ENCODE measurements at regions of chr2 and their contacts with region 1.

Region 1: GRCh38 chr2:206442833-206443734 is at the start of gene ADAM23:
- DNase-seq: peak; percentile 87 to 95 (median 92)
- H3K4me3 ChIP-seq: peak within 1 kb of the TSS; percentile 54 to 90 (median 74)
- H3K27ac ChIP-seq: peak within 1 kb of the TSS; percentile 23 to 96 (median 89)
- H3K27me3 ChIP-seq: no peaks in the 10 kb centered on the region
- CTCF ChIP-seq: peak in 54 of 56 donors; percentile 21 to 69 (median 49)
- total RNA-seq, gene ADAM23: 25.3 to 107 (median 76.3) TPM

Region 2: DNA sequence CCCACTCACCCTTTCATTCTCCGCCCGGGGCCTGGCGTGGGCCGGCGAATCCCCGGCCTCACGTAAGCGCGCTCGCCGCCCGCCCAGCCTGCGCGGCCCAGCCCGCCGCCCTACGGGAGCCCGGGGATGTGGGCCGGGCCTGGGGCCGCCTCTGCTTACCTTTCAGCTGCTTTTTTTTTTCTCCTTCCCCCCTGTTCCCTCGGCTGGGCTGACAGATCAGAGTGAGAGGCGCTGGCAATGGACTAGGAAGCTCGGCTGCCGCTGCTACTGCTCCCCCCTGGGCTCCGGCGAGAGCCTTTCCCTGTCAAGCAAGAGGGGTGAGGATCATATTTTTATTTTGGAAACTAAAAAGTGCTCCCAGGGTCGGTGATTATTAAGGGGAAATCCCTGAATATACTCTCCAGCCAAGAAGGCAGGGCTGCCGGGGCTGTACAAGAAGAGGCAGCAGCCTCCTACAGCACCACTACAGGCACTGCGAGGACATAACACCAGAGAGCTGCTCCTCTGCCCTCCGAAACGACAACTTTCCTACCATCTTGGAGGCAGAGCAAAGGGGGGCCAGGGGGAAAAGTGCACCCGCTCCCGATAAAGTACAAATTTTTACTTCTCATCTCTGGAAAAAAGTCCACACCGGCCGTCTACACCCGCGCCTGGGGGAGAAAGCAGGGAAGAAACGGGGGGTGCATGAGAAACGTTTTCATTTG is 357.2 kb before region 1 on chr2 and contains the start of gene INO80D:
- intact Hi-C with region 1: loop called in 1 of 2 experiments (anchors 5 kb)
- DNase-seq: peak; percentile 45 to 85 (median 73)
- H3K4me3 ChIP-seq: peak within 1 kb of the TSS; percentile 71 to 95 (median 86)
- H3K27ac ChIP-seq: peak within 1 kb of the TSS; percentile 93 to 100 (median 99)
- H3K27me3 ChIP-seq: no peaks in the 10 kb centered on the region
- CTCF ChIP-seq: peak in 44 of 56 donors; percentile 10 to 55 (median 28)
- total RNA-seq, gene INO80D: 27.8 to 53.6 (median 36.6) TPM

Region 3: GRCh38 chr2:206392118-206392517 is 51.0 kb before region 1 on chr2:
- intact Hi-C with region 1: no loop called
- DNase-seq: no peak
- H3K4me3 ChIP-seq: no peak overlapping the region
- H3K27ac ChIP-seq: peak overlapping the region in 18 of 59 donors; percentile 4 to 55 (median 26)
- H3K27me3 ChIP-seq: no peaks in the 10 kb centered on the region
- CTCF ChIP-seq: peak in 40 of 56 donors; percentile 13 to 53 (median 28)

Region 4: DNA sequence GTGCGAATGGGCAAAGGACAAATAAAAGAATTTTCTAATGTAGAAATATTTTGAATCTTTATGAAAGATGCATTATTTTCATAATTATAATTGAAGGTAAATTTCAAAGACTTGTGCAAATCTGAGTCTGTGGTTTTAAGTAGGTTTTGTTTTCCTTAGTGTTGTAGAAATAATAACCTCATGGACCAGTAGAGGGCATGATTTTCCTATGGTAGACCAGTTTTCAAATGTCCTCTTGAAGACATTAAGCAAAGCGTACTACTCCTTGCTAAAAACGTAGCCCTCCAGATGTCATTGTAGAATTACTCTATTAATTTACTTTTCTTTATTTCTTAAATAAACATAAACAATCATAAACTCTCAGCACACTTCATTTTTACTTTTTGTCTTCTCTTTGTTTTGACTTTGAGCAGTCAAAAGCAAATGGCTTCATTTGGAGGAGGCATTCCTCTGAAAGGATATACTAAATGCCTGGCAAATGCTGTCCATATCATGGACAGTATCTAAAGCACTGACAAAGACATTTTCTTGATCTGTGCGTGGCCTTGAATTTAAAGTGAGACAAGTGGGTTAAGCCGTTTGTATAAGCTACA is 113.4 kb after region 1 on chr2:
- intact Hi-C with region 1: loop called (anchors 2 to 10 kb)
- DNase-seq: no peak
- H3K4me3 ChIP-seq: no peak overlapping the region
- H3K27ac ChIP-seq: no peak overlapping the region
- H3K27me3 ChIP-seq: no peaks in the 10 kb centered on the region
- CTCF ChIP-seq: peak; percentile 22 to 72 (median 58)

Measured in dorsolateral prefrontal cortex (tissue), 120 donors.